ENCODE measurements at regions of chr3 and their contacts with region 1.

Region 1: DNA sequence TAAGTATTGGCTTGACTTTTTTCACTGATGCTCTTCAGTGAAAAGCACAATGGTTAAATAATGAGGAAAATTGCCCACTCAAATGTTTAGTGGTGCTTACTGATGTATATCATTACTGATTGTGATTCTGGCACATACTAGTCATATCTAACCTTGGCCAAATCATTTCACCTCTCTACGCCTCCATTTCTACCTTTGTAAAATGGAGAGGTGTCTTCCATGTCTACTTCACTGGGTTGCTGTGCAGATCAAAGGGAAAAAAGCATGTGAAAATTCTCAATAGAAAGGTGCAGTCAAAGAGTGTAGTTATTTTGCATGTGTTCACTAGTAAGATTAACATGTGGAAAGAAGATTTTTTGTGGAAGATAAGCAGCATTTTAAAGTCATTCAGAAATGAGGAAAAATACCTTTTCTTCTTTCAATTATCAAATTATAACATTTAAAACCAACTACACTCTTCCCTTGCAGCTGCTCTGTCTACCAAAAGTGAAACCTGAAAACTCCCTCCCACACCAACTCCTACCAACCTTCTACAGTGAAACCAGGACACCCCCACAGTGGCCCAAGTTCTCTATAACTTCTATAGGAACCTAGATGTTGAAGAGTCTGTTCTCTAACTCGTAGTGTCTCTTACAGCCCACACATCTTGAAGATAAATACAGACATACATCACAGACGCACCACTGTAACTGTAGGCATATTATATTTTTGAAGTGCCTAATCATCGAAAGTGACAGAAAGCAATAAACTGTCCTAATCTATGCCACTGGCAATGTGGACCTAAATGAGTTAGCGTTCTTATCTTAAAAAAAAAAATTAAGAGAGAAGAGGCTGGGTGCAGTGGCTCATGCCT is 1.4 kb downstream of the CD200R1 start:
- DNase-seq: peak; percentile 72
- H3K4me3 Mint-ChIP-seq: peak overlapping the region; percentile 82
- H3K27ac Mint-ChIP-seq: peak overlapping the region; percentile 85
- H3K4me1 Mint-ChIP-seq: peaks cover 87% of the 10 kb centered on the region
- H3K27me3 Mint-ChIP-seq: no peaks in the 10 kb centered on the region

Region 2: GRCh38 chr3:112561731-112562688 is 411.5 kb before region 1 on chr3 and contains the starts of genes ATG3 and SLC35A5:
- CTCF ChIA-PET with region 1: no interaction called
- POLR2A ChIA-PET with region 1: no interaction called
- intact Hi-C with region 1: loop called (anchors 1 kb)
- DNase-seq: peak; percentile 99
- H3K4me3 Mint-ChIP-seq: peak within 1 kb of the TSS; percentile 87
- H3K27ac Mint-ChIP-seq: peak within 1 kb of the TSS; percentile 98
- H3K4me1 Mint-ChIP-seq: peaks cover 31% of the 10 kb centered on the region
- H3K27me3 Mint-ChIP-seq: no peaks in the 10 kb centered on the region
- total RNA-seq, gene ATG3: 58.1 to 59.5 TPM
- total RNA-seq, gene SLC35A5: 15.5 to 17.8 TPM

Region 3: GRCh38 chr3:112676659-112677234 is 296.8 kb before region 1 on chr3:
- CTCF ChIA-PET with region 1: no interaction called
- POLR2A ChIA-PET with region 1: no interaction called
- intact Hi-C with region 1: loop called (anchors 1 kb)
- DNase-seq: peak; percentile 96
- H3K4me3 Mint-ChIP-seq: peak overlapping the region; percentile 14
- H3K27ac Mint-ChIP-seq: peak overlapping the region; percentile 14
- H3K4me1 Mint-ChIP-seq: peaks cover 52% of the 10 kb centered on the region
- H3K27me3 Mint-ChIP-seq: peaks cover 14% of the 10 kb centered on the region

Region 4: GRCh38 chr3:112845772-112846171 is 127.8 kb before region 1 on chr3:
- CTCF ChIA-PET with region 1: interaction called, 3 read pairs
- POLR2A ChIA-PET with region 1: no interaction called
- intact Hi-C with region 1: loop called (anchors 1 kb)
- DNase-seq: no peak
- H3K4me3 Mint-ChIP-seq: no peak overlapping the region
- H3K27ac Mint-ChIP-seq: no peak overlapping the region
- H3K4me1 Mint-ChIP-seq: peaks cover 30% of the 10 kb centered on the region
- H3K27me3 Mint-ChIP-seq: no peaks in the 10 kb centered on the region

Region 5: DNA sequence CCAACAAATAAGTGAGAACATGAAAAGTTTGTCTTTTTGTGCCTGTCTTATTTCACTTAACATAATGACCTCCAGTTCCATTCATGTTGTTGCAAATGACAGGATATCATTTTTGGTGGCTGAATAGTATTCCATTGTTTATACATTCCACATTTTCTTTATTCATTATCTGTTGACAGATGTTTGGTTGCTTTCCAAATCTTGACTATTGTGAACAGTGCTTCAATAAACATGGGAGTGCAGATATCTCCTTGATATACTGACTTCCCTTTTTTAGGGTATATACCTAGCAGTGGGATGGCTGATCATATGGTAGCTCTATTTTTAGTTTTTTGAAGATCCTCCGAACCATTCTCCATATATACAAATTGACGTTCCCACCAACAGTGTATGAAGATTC is 107.8 kb before region 1 on chr3:
- CTCF ChIA-PET with region 1: no interaction called
- POLR2A ChIA-PET with region 1: no interaction called
- intact Hi-C with region 1: no loop called
- DNase-seq: no peak
- H3K4me3 Mint-ChIP-seq: no peak overlapping the region
- H3K27ac Mint-ChIP-seq: no peak overlapping the region
- H3K4me1 Mint-ChIP-seq: peaks cover 2% of the 10 kb centered on the region
- H3K27me3 Mint-ChIP-seq: no peaks in the 10 kb centered on the region

Region 6: DNA sequence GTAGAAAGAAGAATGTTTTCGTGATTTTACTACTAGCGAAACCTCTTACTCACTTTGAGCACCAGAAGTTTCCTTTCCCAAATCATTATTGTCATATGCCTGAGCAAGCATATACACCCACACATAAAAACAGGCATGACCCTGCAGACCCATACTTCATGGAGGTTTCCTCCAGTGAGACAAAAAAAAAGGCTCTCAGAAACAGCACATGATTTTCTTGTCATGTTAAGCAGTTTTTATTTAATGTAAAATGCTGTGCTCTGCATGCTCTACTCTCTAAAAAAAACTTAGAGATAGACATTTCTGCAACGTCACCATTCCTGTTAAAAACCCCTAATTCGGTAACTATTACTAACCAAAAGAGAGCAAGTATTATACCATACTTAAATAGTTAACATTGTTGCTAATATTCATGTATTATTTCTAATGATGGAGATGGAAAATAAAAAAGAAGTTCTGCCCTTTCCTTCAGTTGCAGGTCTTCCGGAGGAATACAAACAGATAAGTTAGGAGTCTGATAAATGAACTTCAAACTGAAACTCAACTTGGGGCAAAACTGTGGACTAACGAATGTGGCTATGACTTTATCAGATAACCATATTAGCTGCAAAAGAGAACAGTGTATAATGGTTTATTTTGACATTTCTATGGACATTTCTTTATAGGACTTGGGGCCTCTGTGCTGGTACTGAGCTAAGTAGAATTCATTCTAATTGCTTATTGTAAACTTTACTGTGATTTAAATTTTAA is 14.6 kb before region 1 on chr3:
- CTCF ChIA-PET with region 1: interaction called, 3 read pairs
- POLR2A ChIA-PET with region 1: interaction called, 8 read pairs
- intact Hi-C with region 1: loop called (anchors 1 kb)
- DNase-seq: peak; percentile 42
- H3K4me3 Mint-ChIP-seq: peak overlapping the region; percentile 69
- H3K27ac Mint-ChIP-seq: peak overlapping the region; percentile 78
- H3K4me1 Mint-ChIP-seq: peaks cover 48% of the 10 kb centered on the region
- H3K27me3 Mint-ChIP-seq: no peaks in the 10 kb centered on the region

Region 7: DNA sequence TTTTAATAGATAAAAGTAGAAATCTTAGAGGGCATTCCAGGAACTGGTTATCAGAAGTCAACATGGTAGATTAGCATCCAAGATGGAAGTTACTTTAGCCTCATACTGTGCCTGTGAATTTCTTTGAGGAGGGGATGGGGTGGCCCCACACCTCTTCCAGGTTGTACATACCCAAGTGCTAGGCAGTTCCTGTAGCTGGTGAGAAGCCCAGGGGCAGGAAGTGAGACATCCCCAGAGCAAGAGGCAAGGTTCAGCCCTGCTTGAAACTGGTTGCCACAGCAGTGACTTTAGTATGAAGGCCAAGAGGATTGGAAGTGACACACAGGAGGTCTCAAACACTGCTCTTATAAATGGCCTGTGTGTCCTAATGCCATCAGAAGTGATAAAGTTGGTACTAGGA is 29.1 kb after region 1 on chr3:
- CTCF ChIA-PET with region 1: no interaction called
- POLR2A ChIA-PET with region 1: interaction called, 7 read pairs
- intact Hi-C with region 1: loop called (anchors 1 kb)
- DNase-seq: peak; percentile 81
- H3K4me3 Mint-ChIP-seq: no peak overlapping the region
- H3K27ac Mint-ChIP-seq: peak overlapping the region; percentile 84
- H3K4me1 Mint-ChIP-seq: peaks cover 68% of the 10 kb centered on the region
- H3K27me3 Mint-ChIP-seq: no peaks in the 10 kb centered on the region

Region 8: GRCh38 chr3:113698956-113699355 is 725.4 kb after region 1 on chr3:
- CTCF ChIA-PET with region 1: no interaction called
- POLR2A ChIA-PET with region 1: no interaction called
- intact Hi-C with region 1: no loop called
- DNase-seq: peak; percentile 29
- H3K4me3 Mint-ChIP-seq: peak overlapping the region; percentile 10
- H3K27ac Mint-ChIP-seq: no peak overlapping the region
- H3K4me1 Mint-ChIP-seq: peaks cover 13% of the 10 kb centered on the region
- H3K27me3 Mint-ChIP-seq: no peaks in the 10 kb centered on the region